ENCODE measurements at regions of chr21 and their contacts with region 1.

Region 1: GRCh38 chr21:33403779-33404585 is 769 bp downstream of the IFNGR2 start:
- DNase-seq: peak in 1 of 2 experiments; percentile 22
- H3K4me3 ChIP-seq: peak overlapping the region; percentile 65
- H3K27ac ChIP-seq: peak overlapping the region; percentile 56
- H3K4me1 ChIP-seq: peaks cover 8% of the 10 kb centered on the region; the same call in 1 of the 2 replicates
- H3K27me3 ChIP-seq: no peaks in the 10 kb centered on the region
- CTCF ChIP-seq: no peak

Region 2: GRCh38 chr21:32514275-32515055 is 889.5 kb before region 1 on chr21:
- CTCF ChIA-PET with region 1: no interaction called
- POLR2A ChIA-PET with region 1: interaction called, 15 read pairs
- intact Hi-C with region 1: no loop called
- DNase-seq: no peak
- H3K4me3 ChIP-seq: no peak overlapping the region
- H3K27ac ChIP-seq: no peak overlapping the region
- H3K4me1 ChIP-seq: no peaks in the 10 kb centered on the region
- H3K27me3 ChIP-seq: no peaks in the 10 kb centered on the region
- CTCF ChIP-seq: no peak

Region 3: DNA sequence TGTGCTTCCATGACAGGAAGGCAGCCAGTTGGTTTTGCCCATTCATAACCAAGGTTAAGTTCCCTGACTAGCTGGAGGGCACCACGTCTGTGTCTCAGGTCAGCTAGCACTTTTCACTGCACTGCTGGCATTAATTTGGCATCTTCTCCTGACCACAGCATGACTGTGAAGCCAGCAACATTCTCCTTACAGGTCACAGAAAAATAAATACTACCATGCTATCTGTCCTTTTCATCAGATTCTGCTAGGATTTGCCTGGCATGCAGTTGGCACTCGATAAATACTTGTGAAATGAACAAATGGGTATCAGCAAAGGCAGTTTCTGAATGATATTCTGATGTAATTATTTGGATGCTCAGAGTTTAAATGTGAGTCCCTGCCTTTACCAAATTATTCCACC is 220.6 kb before region 1 on chr21:
- CTCF ChIA-PET with region 1: no interaction called
- POLR2A ChIA-PET with region 1: no interaction called
- intact Hi-C with region 1: no loop called
- DNase-seq: no peak
- H3K4me3 ChIP-seq: no peak overlapping the region
- H3K27ac ChIP-seq: no peak overlapping the region
- H3K4me1 ChIP-seq: no peaks in the 10 kb centered on the region
- H3K27me3 ChIP-seq: peaks cover 44% of the 10 kb centered on the region
- CTCF ChIP-seq: no peak

Region 4: GRCh38 chr21:33360881-33361602 is 42.9 kb before region 1 on chr21:
- CTCF ChIA-PET with region 1: no interaction called
- POLR2A ChIA-PET with region 1: no interaction called
- intact Hi-C with region 1: loop called (anchors 1 kb)
- DNase-seq: peak in 1 of 2 experiments; percentile 66
- H3K4me3 ChIP-seq: no peak overlapping the region
- H3K27ac ChIP-seq: no peak overlapping the region
- H3K4me1 ChIP-seq: 0 out of 2 replicates have a peak, but pooled peaks cover 6% of the 10 kb centered on the region
- H3K27me3 ChIP-seq: no peaks in the 10 kb centered on the region
- CTCF ChIP-seq: peak; percentile 73

Region 5: GRCh38 chr21:33380483-33380998 is 23.4 kb before region 1 on chr21:
- CTCF ChIA-PET with region 1: interaction called, 4 read pairs
- POLR2A ChIA-PET with region 1: interaction called, 8 read pairs
- intact Hi-C with region 1: loop called (anchors 1 kb)
- DNase-seq: peak; percentile 89 to 92
- H3K4me3 ChIP-seq: peak overlapping the region; percentile 19; the same call in 1 of the 2 replicates
- H3K27ac ChIP-seq: peak overlapping the region; percentile 100
- H3K4me1 ChIP-seq: peaks cover 62% of the 10 kb centered on the region
- H3K27me3 ChIP-seq: no peaks in the 10 kb centered on the region
- CTCF ChIP-seq: no peak

Region 6: DNA sequence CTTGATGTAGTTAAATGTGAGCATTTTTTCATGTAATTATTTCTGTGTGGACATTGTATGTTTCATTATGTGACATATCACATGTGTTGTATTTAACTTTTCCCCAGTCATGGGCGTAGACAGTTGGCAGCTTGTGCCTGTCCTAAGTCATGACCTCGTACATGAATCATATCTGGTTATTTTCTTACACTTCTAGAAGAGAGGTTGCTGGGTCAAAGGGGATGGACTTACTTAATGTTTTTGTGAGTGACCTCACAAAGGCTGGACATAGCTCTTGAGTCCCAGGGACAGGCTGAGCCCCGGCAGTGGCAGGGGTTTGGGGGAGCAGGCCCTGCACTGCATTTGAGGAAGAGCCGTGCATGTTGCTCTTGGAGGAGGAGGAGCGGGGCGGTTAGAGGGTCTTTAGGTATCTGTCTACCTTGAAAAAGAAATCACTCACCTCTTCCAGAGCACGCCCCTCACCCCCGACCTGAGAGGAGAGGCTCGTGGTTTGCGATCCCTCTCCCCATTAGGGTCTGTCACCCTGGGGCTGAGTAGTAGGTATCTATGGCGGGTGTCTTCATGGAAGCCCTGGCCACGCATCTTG is 15.6 kb after region 1 on chr21:
- CTCF ChIA-PET with region 1: no interaction called
- POLR2A ChIA-PET with region 1: no interaction called
- intact Hi-C with region 1: no loop called
- DNase-seq: peak in 1 of 2 experiments; percentile 71
- H3K4me3 ChIP-seq: no peak overlapping the region
- H3K27ac ChIP-seq: 0 out of 2 replicates have a peak overlapping the region, but pooled peaks have one; percentile 34
- H3K4me1 ChIP-seq: peaks cover 18% of the 10 kb centered on the region
- H3K27me3 ChIP-seq: no peaks in the 10 kb centered on the region
- CTCF ChIP-seq: no peak

Measured in PC-9 (cell line).